IMR-90 (cell line): ENCODE measurements at regions of chr10 and their contacts with region 1.

Region 1: GRCh38 chr10:19606968-19607367 is 209.3 kb upstream of the PLXDC2 start:
- DNase-seq: peak; percentile 30
- ATAC-seq: no peak
- H3K4me3 ChIP-seq: no peak overlapping the region
- H3K27ac ChIP-seq: no peak overlapping the region
- H3K4me1 ChIP-seq: no peaks in the 10 kb centered on the region
- H3K27me3 ChIP-seq: no peaks in the 10 kb centered on the region
- CTCF ChIP-seq: no peak
- POLR2A ChIP-seq: no peak
- RAD21 ChIP-seq: no peak

Region 2: GRCh38 chr10:18699849-18700840 is 906.8 kb before region 1 on chr10:
- CTCF ChIA-PET with region 1: no interaction called
- POLR2A ChIA-PET with region 1: no interaction called
- dilution Hi-C with region 1: no loop called
- in situ Hi-C with region 1: no loop called
- intact Hi-C with region 1: loop called (anchors 10 kb)
- DNase-seq: peak; percentile 58
- ATAC-seq: peak; percentile 87
- H3K4me3 ChIP-seq: no peak overlapping the region
- H3K27ac ChIP-seq: peak overlapping the region; percentile 64; the same call in 1 of the 2 replicates
- H3K4me1 ChIP-seq: peaks cover 6% of the 10 kb centered on the region
- H3K27me3 ChIP-seq: peaks cover 1% of the 10 kb centered on the region; the same call in 1 of the 2 replicates
- CTCF ChIP-seq: no peak
- POLR2A ChIP-seq: no peak
- RAD21 ChIP-seq: no peak